Activated naive CD4-positive, alpha-beta T cell treated with anti-CD3 and anti-CD28 coated beads for 36 hours (primary cell): ENCODE measurements at regions of chr11 and their contacts with region 1.

Region 1: DNA sequence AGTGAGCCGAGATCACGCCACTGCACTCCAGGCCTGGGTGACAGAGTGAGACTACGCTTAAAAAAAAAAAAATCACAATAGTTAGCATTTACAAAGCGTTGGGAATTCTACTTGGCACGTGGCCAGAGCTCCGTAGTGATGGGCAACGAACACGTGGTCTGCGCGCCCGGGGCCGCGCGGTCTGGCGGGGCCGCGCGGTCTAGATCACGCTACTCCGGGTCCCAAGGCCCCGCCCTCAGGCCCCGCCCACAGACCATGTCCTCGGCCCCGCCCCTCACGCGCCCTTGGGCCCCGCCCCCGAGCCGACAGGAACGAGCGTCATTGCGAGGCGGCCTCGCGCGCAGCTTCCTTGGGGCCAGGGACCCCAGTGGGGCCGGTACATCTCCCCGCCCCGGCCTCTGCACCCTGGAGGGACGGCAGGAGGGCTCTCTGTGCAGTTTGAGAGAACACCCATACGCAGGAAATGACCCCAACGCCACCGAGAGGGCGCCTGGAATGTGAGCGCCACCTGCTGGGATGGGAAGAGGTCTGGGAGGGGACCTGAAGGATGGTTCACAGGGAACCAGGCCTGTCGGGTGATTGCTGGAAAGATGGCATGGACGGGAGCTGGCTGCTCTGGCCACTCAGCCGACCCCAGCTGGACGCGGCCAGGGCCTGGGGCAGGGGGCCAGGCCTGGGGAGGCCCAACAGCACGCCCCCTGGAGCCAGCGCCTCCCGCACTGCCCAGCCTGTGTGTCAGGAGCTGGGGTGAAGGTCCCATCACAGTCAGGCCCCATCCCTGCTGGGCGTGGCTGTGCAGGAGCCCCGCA is 2.0 kb upstream of the PTDSS2 start:
- DNase-seq: peak; percentile 97
- H3K4me3 Mint-ChIP-seq: peak overlapping the region; percentile 93
- H3K27ac Mint-ChIP-seq: peak overlapping the region; percentile 95
- H3K4me1 Mint-ChIP-seq: peaks cover 24% of the 10 kb centered on the region
- H3K27me3 Mint-ChIP-seq: no peaks in the 10 kb centered on the region

Region 2: DNA sequence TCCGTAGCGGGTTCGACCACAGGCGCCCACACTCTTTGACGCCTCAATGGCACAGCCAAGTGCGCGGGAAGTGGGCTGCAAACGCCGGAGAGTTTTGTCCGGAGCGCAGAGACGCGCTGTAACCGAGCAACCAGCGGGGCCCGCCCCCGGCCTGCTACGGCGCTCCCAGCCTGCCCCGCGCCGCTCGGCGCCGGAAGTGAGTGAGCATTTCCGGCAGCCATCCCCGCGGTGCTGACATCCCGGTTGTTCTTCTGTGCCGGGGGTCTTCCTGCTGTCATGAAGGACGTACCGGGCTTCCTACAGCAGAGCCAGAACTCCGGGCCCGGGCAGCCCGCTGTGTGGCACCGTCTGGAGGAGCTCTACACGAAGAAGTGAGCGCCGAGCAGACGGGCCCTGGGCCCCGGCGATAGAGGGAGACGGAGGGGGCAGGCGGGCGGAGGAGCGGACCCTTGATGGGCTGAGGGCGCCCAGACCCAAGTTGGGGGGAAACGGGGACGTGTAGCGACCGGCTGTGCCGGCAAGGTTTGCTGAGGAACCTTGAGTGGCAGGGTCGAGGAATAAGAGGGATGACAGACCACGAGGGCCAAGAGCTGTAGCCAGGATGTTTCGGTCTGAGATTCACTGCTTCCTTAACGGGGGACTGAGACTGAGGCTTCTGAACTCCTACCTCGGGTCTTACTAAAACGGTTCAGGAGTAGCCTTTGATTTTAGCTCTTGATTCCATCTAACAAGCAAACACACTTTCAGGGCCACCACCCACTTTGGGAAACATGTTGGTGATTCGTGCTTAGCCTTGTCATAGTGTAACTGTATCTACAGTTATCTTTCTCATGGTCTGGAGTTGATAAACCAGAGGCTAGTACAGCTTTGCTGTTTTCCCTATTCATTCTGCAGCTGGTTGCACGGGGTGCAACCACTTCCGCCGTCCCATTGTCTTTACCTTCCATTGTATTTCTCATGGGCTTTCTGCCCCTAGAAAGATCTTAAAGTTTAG is 211.1 kb before region 1 on chr11 and contains the start of gene PSMD13:
- CTCF ChIA-PET with region 1: no interaction called
- intact Hi-C with region 1: loop called (anchors 1 kb)
- DNase-seq: peak; percentile 89
- H3K4me3 Mint-ChIP-seq: peak within 1 kb of the TSS; percentile 85
- H3K27ac Mint-ChIP-seq: peak within 1 kb of the TSS; percentile 95
- H3K4me1 Mint-ChIP-seq: peaks cover 45% of the 10 kb centered on the region
- H3K27me3 Mint-ChIP-seq: no peaks in the 10 kb centered on the region
- total RNA-seq, gene PSMD13: 206 to 210 TPM

Region 3: DNA sequence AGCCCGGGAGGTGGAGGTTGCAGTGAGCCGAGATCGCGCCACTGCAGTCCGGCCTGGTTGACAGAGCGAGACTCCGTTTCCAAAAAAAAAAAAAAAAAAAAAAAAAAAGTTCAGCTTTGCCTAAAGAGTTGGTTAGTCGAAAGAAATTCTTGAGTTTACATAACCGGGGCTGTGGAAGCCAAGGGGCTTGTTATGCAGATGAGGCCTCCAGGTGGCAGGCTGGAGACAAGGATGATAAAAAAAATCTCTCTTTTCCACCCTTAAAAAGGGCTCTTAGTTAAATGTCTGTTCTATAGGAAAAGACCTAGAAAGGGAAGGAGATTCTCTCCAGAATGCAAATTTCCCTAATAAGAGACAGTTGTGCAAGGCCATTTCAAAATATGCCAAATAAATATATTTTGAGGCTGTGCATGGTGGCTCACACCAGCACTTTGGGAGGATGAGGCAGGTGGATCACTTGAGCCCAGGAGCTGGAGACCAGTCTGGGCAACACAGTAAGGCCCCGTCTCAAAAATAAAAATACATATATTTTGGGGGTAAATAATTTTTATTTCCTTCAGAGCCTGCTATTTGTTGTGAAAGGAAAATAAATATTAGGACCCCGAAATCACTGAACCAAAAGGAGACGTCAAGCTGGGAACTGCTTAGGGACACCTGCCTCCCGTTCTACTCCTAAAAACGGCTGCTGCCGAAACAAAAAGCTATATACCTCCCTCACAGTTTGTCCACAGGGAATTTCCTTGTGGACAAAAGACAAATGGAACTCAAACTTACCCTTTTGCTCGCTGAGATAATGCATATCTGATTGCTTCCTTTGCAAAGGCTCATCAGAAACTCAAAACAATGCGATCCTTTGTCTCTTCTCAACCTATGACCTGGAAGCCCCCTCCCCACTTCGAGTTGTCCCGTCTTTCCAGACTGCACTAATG is 142.9 kb before region 1 on chr11:
- CTCF ChIA-PET with region 1: interaction called, 11 read pairs
- intact Hi-C with region 1: loop called (anchors 1 kb)
- DNase-seq: peak; percentile 85
- H3K4me3 Mint-ChIP-seq: no peak overlapping the region
- H3K27ac Mint-ChIP-seq: no peak overlapping the region
- H3K4me1 Mint-ChIP-seq: peaks cover 38% of the 10 kb centered on the region
- H3K27me3 Mint-ChIP-seq: peaks cover 8% of the 10 kb centered on the region

Region 4: DNA sequence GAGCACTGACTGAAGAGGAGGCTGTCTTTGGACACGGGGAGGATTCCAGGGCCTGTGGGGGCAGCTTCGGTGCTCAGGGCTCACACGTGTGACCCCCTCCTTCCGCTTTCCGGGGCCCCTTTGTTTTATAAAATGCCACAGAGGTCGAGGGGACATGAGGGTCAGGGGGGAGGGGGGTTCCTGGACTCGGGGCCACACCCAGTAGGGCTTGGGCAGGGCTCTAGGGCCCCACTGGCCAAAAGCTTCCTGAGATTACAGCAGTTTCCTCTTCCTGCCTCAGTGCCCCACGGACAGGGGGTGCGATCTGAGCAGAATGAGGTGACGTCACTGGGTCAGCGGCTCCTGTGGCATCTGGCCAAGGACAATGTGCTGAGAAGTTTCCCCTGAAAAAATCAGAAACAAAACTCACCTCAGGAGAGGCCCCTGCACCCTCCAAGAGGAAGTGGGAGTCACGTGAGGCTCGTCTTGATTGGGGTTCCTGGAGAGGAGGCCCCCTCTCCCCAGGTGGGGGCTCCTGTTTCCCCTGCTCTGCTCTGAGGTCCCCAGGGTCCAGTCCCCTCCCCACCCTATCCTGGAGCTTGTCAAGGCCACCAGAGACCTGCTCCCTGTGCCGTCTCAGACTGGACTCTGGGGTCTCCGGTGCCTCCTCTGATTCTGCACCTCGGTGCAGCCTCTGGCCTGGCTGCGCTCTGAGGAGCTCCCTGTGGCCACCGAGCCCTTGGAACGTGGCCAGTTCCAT is 121.1 kb before region 1 on chr11:
- CTCF ChIA-PET with region 1: no interaction called
- intact Hi-C with region 1: no loop called
- DNase-seq: peak; percentile 92
- H3K4me3 Mint-ChIP-seq: peak overlapping the region; percentile 72
- H3K27ac Mint-ChIP-seq: peak overlapping the region; percentile 98
- H3K4me1 Mint-ChIP-seq: peaks cover 73% of the 10 kb centered on the region
- H3K27me3 Mint-ChIP-seq: no peaks in the 10 kb centered on the region

Region 5: GRCh38 chr11:406978-407739 is 41.0 kb before region 1 on chr11:
- CTCF ChIA-PET with region 1: interaction called, 21 read pairs
- intact Hi-C with region 1: loop called (anchors 1 kb)
- DNase-seq: peak; percentile 91
- H3K4me3 Mint-ChIP-seq: peak overlapping the region; percentile 58
- H3K27ac Mint-ChIP-seq: no peak overlapping the region
- H3K4me1 Mint-ChIP-seq: peaks cover 2% of the 10 kb centered on the region
- H3K27me3 Mint-ChIP-seq: no peaks in the 10 kb centered on the region

Region 6: DNA sequence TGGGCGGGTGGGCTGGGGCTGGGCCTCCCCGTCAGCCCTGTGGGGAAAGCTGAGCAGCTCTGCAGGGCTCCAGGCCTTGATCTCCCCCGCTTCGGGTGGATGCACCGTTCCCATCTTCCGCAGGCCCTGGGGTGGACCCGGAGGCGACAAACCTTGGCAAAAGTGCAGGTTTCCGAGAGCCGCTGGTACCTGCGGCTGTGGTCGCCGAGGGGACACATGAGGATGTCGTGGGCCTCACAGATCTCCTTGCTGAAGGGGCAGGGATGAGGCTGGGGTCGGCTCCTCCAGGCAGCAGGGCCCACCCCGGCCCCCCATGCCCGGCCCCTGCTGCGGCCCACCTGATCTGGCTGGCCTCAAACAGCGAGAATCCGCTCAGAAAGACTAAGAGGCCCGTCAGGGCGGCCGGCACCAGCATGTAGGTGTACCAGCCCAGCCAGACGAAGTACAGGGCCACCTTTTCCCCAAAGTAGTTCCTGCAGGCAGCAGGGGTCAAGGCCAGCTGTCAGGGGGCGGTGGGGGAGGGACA is 18.1 kb before region 1 on chr11:
- CTCF ChIA-PET with region 1: no interaction called
- intact Hi-C with region 1: no loop called
- DNase-seq: no peak
- H3K4me3 Mint-ChIP-seq: no peak overlapping the region
- H3K27ac Mint-ChIP-seq: no peak overlapping the region
- H3K4me1 Mint-ChIP-seq: no peaks in the 10 kb centered on the region
- H3K27me3 Mint-ChIP-seq: no peaks in the 10 kb centered on the region

Region 7: GRCh38 chr11:518463-519250 is 70.5 kb after region 1 on chr11:
- CTCF ChIA-PET with region 1: interaction called, 8 read pairs
- intact Hi-C with region 1: loop called (anchors 2 kb)
- DNase-seq: peak; percentile 87
- H3K4me3 Mint-ChIP-seq: peak overlapping the region; percentile 84
- H3K27ac Mint-ChIP-seq: peak overlapping the region; percentile 76
- H3K4me1 Mint-ChIP-seq: peaks cover 4% of the 10 kb centered on the region
- H3K27me3 Mint-ChIP-seq: no peaks in the 10 kb centered on the region

Region 8: GRCh38 chr11:695538-696248 is 247.6 kb after region 1 on chr11 and contains the start of gene TMEM80:
- CTCF ChIA-PET with region 1: no interaction called
- intact Hi-C with region 1: loop called (anchors 1 kb)
- DNase-seq: peak; percentile 99
- H3K4me3 Mint-ChIP-seq: peak within 1 kb of the TSS; percentile 83
- H3K27ac Mint-ChIP-seq: peak within 1 kb of the TSS; percentile 93
- H3K4me1 Mint-ChIP-seq: peaks cover 54% of the 10 kb centered on the region
- H3K27me3 Mint-ChIP-seq: no peaks in the 10 kb centered on the region
- total RNA-seq, gene TMEM80: 5.6 to 6.0 TPM